ENCODE measurements at regions of chr15 and their contacts with region 1.

Region 1: GRCh38 chr15:72155635-72156616 is 37.7 kb downstream of the SENP8 start:
- DNase-seq: peak; percentile 66 to 86 (median 80)
- ATAC-seq: peak; percentile 74
- H3K4me3 ChIP-seq: peak overlapping the region; percentile 13 to 30
- H3K4me3 Mint-ChIP-seq: peak overlapping the region; percentile 80
- H3K27ac ChIP-seq: no peak overlapping the region
- H3K27ac Mint-ChIP-seq: no peak overlapping the region
- H3K4me1 ChIP-seq: no peaks in the 10 kb centered on the region
- H3K4me1 Mint-ChIP-seq: peaks cover 4% of the 10 kb centered on the region
- H3K27me3 ChIP-seq: no peaks in the 10 kb centered on the region
- H3K27me3 Mint-ChIP-seq: no peaks in the 10 kb centered on the region
- CTCF ChIP-seq: peak; percentile 90

Region 2: GRCh38 chr15:71386448-71387236 is 769.3 kb before region 1 on chr15:
- CTCF ChIA-PET with region 1: interaction called, 4 read pairs
- POLR2A ChIA-PET with region 1: no interaction called
- intact Hi-C with region 1: loop called in 1 of 2 experiments (anchors 10 kb)
- DNase-seq: peak in 2 of 9 experiments; percentile 13 to 19
- ATAC-seq: no peak
- H3K4me3 ChIP-seq: no peak overlapping the region
- H3K4me3 Mint-ChIP-seq: no peak overlapping the region
- H3K27ac ChIP-seq: no peak overlapping the region
- H3K27ac Mint-ChIP-seq: no peak overlapping the region
- H3K4me1 ChIP-seq: no peaks in the 10 kb centered on the region
- H3K4me1 Mint-ChIP-seq: peaks cover 2% of the 10 kb centered on the region
- H3K27me3 ChIP-seq: no peaks in the 10 kb centered on the region
- H3K27me3 Mint-ChIP-seq: peaks cover 14% of the 10 kb centered on the region
- CTCF ChIP-seq: peak; percentile 36

Region 3: GRCh38 chr15:71752604-71753289 is 403.2 kb before region 1 on chr15:
- CTCF ChIA-PET with region 1: interaction called, 19 read pairs
- POLR2A ChIA-PET with region 1: no interaction called
- intact Hi-C with region 1: no loop called
- DNase-seq: no peak
- ATAC-seq: no peak
- H3K4me3 ChIP-seq: no peak overlapping the region
- H3K4me3 Mint-ChIP-seq: no peak overlapping the region
- H3K27ac ChIP-seq: no peak overlapping the region
- H3K27ac Mint-ChIP-seq: no peak overlapping the region
- H3K4me1 ChIP-seq: no peaks in the 10 kb centered on the region
- H3K4me1 Mint-ChIP-seq: no peaks in the 10 kb centered on the region
- H3K27me3 ChIP-seq: no peaks in the 10 kb centered on the region
- H3K27me3 Mint-ChIP-seq: peaks cover 16% of the 10 kb centered on the region
- CTCF ChIP-seq: no peak

Region 4: DNA sequence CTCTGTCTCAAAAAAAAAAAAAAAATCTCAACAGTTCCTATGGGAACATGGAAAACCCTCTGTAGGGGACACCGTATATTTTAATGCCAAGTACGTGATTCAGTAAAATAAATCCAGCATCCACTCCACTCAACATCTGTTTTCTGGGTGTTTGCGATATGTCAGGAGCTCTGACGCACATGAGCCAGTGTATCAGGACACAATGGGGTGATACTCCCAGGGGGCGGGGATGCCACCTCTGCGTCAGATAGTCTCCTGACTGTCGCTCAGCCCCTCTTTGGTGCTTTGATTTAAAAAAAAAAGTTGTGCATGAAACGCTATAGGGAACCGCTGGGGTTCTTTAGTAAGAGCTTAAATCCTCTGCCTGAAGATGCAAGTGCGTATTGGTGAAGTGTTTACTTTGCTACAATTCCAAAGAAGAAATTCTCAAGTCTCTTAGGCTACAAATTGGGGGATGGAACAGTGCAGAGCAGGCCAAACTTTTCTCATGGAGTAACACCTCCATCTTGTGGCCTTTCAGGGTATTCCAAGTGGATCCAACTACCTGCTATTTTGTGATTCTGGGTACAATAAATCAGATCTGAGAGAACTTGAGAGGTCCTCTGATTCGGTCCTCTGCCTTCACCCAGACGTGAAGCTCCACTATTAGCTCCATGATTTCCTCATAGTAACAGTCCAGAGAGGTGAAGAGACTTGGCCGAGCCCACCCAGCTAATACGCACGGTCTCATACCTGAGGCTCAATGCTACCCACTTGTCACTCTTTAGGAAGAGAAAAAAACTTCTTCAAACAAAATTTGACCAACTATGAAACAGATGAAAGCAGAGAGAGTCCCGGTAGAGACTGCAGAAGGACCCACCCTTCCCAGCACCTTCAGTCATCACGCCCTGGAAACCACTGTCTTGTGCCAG is 354.8 kb before region 1 on chr15:
- CTCF ChIA-PET with region 1: interaction called, 10 read pairs
- POLR2A ChIA-PET with region 1: no interaction called
- intact Hi-C with region 1: no loop called
- DNase-seq: peak in 2 of 9 experiments; percentile 21 to 36
- ATAC-seq: no peak
- H3K4me3 ChIP-seq: no peak overlapping the region
- H3K4me3 Mint-ChIP-seq: no peak overlapping the region
- H3K27ac ChIP-seq: no peak overlapping the region
- H3K27ac Mint-ChIP-seq: no peak overlapping the region
- H3K4me1 ChIP-seq: no peaks in the 10 kb centered on the region
- H3K4me1 Mint-ChIP-seq: no peaks in the 10 kb centered on the region
- H3K27me3 ChIP-seq: no peaks in the 10 kb centered on the region
- H3K27me3 Mint-ChIP-seq: peaks cover 19% of the 10 kb centered on the region
- CTCF ChIP-seq: no peak

Region 5: DNA sequence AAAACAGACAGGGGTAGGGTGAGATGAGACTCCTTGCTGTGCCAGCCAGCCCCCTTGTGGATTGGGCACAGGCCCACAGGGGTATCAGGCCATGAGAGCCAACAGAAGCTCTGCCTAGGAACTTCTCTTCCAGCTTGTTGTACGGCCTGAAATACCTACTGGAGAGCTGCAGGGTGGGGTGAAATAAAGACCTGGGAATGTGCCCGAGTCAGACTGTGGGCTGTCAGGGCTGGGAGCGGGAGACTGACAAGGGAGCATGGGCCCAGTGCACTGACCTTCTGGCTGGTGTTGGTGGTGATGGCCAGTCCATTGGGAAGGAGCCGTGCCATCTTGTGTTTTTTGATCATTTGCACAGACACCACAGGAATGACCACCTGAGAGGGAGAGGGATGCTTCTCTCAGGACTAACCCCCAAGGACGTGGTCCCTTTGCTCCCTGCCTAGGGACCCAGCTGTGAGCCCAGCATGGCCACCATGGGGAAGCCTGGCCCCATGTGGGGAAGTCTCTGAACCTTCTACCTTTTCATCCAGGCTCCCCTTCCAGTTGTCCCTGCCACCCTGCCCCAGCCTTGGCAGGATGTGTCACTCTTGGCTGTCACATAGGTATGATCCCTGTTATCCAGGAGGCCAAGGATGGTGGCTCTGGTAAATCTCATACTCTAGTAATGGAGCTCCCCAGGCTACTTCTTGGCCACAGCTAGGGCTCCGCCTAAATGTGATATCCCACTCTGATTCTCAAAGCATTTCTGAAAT is 11.0 kb after region 1 on chr15:
- CTCF ChIA-PET with region 1: interaction called, 12 read pairs
- POLR2A ChIA-PET with region 1: no interaction called
- intact Hi-C with region 1: no loop called
- DNase-seq: no peak
- ATAC-seq: no peak
- H3K4me3 ChIP-seq: no peak overlapping the region
- H3K4me3 Mint-ChIP-seq: no peak overlapping the region
- H3K27ac ChIP-seq: no peak overlapping the region
- H3K27ac Mint-ChIP-seq: no peak overlapping the region
- H3K4me1 ChIP-seq: no peaks in the 10 kb centered on the region
- H3K4me1 Mint-ChIP-seq: peaks cover 5% of the 10 kb centered on the region
- H3K27me3 ChIP-seq: no peaks in the 10 kb centered on the region
- H3K27me3 Mint-ChIP-seq: no peaks in the 10 kb centered on the region
- CTCF ChIP-seq: no peak

Region 6: DNA sequence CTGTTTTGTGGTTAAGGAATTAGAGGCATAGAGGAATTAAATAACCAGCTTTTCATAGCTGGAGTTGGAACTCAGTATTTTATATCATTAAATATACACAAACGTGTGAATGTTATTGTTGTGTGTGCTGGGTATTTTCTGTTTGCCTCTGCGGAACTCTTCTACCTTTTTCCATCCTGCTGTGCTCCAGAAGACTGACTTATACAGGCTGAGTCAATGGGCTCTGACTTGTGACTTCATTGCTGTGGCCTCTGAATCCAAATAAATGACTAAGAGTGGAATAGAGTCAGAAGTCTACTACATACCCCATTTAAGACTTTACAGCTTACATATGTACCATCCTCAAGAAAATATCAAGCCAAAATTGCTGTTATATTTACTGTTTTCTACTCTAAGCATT is 335.8 kb after region 1 on chr15:
- CTCF ChIA-PET with region 1: no interaction called
- POLR2A ChIA-PET with region 1: no interaction called
- intact Hi-C with region 1: no loop called
- DNase-seq: no peak
- ATAC-seq: no peak
- H3K4me3 ChIP-seq: no peak overlapping the region
- H3K4me3 Mint-ChIP-seq: no peak overlapping the region
- H3K27ac ChIP-seq: no peak overlapping the region
- H3K27ac Mint-ChIP-seq: no peak overlapping the region
- H3K4me1 ChIP-seq: peaks cover 56% of the 10 kb centered on the region
- H3K4me1 Mint-ChIP-seq: peaks cover 81% of the 10 kb centered on the region
- H3K27me3 ChIP-seq: no peaks in the 10 kb centered on the region
- H3K27me3 Mint-ChIP-seq: no peaks in the 10 kb centered on the region
- CTCF ChIP-seq: no peak

Region 7: DNA sequence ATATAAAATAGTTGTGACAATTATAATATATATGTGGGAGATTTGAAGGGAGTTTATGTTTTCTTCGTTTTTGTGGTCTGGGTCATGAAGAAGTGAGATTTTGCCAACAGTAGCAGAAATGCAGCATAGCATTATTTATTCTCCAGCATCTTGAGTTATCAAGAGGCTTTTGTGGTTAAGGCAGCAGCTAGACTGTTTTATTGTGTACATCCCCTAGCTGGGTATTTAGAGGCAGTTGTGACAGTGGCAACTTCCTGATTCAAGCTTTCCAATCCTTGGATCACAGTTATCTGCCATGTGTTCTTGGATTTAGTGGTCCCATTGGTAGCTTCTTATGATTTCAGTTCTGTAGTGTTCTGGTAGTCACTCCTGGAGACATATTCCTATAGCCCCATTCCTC is 347.2 kb after region 1 on chr15:
- CTCF ChIA-PET with region 1: no interaction called
- POLR2A ChIA-PET with region 1: no interaction called
- intact Hi-C with region 1: no loop called
- DNase-seq: peak in 2 of 9 experiments; percentile 14 to 42
- ATAC-seq: no peak
- H3K4me3 ChIP-seq: no peak overlapping the region
- H3K4me3 Mint-ChIP-seq: peak overlapping the region; percentile 26
- H3K27ac ChIP-seq: peak overlapping the region in 1 of 2 experiments; percentile 9
- H3K27ac Mint-ChIP-seq: peak overlapping the region; percentile 42
- H3K4me1 ChIP-seq: peaks cover 27% of the 10 kb centered on the region
- H3K4me1 Mint-ChIP-seq: peaks cover 70% of the 10 kb centered on the region
- H3K27me3 ChIP-seq: no peaks in the 10 kb centered on the region
- H3K27me3 Mint-ChIP-seq: no peaks in the 10 kb centered on the region
- CTCF ChIP-seq: no peak